IMR-90 (cell line): ENCODE measurements at regions of chr15 and their contacts with region 1.

Region 1: DNA sequence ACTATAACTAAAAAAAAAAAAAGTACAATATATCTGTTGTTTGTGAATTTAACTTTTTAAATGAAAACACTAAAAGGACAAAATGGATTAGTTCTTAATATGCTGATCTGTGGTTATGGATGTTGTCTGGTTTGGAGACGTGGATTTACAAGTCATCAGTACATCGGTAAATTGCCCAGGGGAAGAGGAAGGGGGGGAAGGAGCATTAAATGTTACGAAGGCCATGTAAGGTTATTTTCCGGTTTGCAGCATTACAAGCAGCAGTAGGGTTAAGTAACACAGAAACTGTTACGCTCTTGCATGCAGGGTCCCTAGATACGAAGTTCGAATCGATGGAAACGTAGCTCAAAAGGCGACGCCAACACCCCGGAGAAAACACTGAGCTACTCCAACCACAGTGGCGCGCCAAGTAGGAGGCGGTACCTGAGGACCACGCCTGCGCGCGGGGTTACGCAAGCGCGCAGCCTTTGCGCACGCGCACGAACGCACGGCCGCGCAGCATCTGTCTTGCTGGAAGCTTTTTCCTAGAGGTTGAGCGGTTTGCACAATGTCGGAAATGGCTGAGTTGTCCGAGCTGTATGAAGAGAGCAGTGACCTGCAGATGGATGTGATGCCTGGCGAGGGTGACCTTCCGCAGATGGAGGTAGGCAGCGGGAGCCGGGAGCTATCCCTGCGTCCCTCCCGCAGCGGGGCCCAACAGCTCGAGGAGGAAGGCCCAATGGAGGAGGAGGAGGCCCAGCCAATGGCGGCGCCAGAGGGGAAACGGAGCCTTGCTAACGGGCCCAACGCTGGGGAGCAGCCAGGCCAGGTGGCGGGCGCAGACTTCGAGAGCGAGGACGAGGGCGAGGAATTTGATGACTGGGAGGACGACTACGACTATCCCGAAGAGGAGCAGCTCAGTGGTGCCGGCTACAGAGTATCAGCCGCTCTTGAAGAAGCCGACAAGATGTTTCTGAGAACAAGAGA is at the start of gene EID1:
- DNase-seq: peak; percentile 95
- ATAC-seq: peak; percentile 94
- H3K4me3 ChIP-seq: peak within 1 kb of the TSS; percentile 71
- H3K27ac ChIP-seq: peak within 1 kb of the TSS; percentile 97
- H3K4me1 ChIP-seq: peaks cover 7% of the 10 kb centered on the region
- H3K27me3 ChIP-seq: no peaks in the 10 kb centered on the region
- CTCF ChIP-seq: no peak
- POLR2A ChIP-seq: peak; percentile 55
- RAD21 ChIP-seq: peak; percentile 5; the same call in 1 of the 2 replicates
- total RNA-seq, gene EID1: 147 and 308 TPM in 2 replicates

Region 2: DNA sequence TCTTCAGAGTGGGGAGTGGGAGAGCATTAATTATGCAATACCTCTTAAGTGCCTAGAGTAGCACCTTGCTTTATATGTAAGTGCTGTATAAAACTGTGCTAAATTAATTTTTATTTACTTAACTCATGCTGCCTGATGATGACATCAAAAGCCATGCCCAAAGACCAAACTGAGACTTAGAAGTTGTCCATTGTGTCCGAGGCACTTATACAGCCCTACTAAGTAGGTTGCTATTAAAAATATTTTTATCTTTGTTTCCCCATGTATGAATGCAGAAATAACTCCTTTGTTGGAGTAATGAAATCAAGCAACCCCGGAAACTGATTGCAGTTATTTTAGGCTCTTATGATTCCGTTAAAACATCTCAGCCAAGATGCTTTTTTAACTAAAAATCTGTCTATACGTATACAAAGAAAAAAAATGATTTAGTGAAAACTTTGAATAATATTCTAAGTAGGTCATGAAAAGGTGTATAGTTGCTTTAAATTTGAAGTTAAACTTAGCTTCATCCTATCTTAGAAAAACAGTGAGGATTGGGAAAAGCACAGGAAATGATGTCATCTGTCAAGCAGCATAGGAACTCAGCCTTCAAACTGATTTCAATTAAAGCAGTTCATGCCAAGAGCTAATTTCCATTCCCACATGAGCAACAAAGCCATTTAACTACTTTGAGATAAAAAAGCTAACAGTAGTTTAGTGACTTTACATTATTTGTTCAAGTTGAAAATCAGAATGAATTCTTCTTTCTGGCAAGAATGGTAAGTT is 275.4 kb before region 1 on chr15:
- CTCF ChIA-PET with region 1: no interaction called
- POLR2A ChIA-PET with region 1: no interaction called
- dilution Hi-C with region 1: no loop called
- in situ Hi-C with region 1: no loop called
- intact Hi-C with region 1: no loop called
- DNase-seq: peak; percentile 81
- ATAC-seq: peak; percentile 54
- H3K4me3 ChIP-seq: no peak overlapping the region
- H3K27ac ChIP-seq: no peak overlapping the region
- H3K4me1 ChIP-seq: peaks cover 20% of the 10 kb centered on the region
- H3K27me3 ChIP-seq: no peaks in the 10 kb centered on the region
- CTCF ChIP-seq: no peak
- POLR2A ChIP-seq: no peak
- RAD21 ChIP-seq: no peak

Region 3: GRCh38 chr15:49036650-49037545 is 159.0 kb after region 1 on chr15:
- CTCF ChIA-PET with region 1: no interaction called
- POLR2A ChIA-PET with region 1: no interaction called
- dilution Hi-C with region 1: no loop called
- in situ Hi-C with region 1: no loop called
- intact Hi-C with region 1: loop called (anchors 5 kb)
- DNase-seq: peak; percentile 72
- ATAC-seq: peak; percentile 88
- H3K4me3 ChIP-seq: no peak overlapping the region
- H3K27ac ChIP-seq: no peak overlapping the region
- H3K4me1 ChIP-seq: peaks cover 6% of the 10 kb centered on the region
- H3K27me3 ChIP-seq: no peaks in the 10 kb centered on the region
- CTCF ChIP-seq: no peak
- POLR2A ChIP-seq: no peak
- RAD21 ChIP-seq: no peak